Common myeloid progenitor, CD34-positive (primary cell): ENCODE measurements at regions of chr19 and their contacts with region 1.

Region 1: GRCh38 chr19:56133858-56134653 is 7.0 kb upstream of the ZNF444 start:
- DNase-seq: peak in 2 of 3 donors; percentile 66 to 68
- H3K4me3 ChIP-seq: no peak overlapping the region
- H3K27ac ChIP-seq: no peak overlapping the region
- H3K4me1 ChIP-seq: peaks cover 0 to 10% (median 3%) of the 10 kb centered on the region in 4 experiments
- H3K27me3 ChIP-seq: no peaks in the 10 kb centered on the region

Region 2: GRCh38 chr19:56110515-56111448 is 23.3 kb before region 1 on chr19:
- CTCF ChIA-PET with region 1: no interaction called
- POLR2A ChIA-PET with region 1: no interaction called
- DNase-seq: no peak
- H3K4me3 ChIP-seq: peak overlapping the region in 4 of 7 experiments; percentile 40 to 70 (median 56)
- H3K27ac ChIP-seq: peak overlapping the region in 1 of 2 experiments; percentile 64
- H3K4me1 ChIP-seq: peaks cover 8 to 98% (median 97%) of the 10 kb centered on the region in 4 experiments
- H3K27me3 ChIP-seq: no peaks in the 10 kb centered on the region

Region 3: DNA sequence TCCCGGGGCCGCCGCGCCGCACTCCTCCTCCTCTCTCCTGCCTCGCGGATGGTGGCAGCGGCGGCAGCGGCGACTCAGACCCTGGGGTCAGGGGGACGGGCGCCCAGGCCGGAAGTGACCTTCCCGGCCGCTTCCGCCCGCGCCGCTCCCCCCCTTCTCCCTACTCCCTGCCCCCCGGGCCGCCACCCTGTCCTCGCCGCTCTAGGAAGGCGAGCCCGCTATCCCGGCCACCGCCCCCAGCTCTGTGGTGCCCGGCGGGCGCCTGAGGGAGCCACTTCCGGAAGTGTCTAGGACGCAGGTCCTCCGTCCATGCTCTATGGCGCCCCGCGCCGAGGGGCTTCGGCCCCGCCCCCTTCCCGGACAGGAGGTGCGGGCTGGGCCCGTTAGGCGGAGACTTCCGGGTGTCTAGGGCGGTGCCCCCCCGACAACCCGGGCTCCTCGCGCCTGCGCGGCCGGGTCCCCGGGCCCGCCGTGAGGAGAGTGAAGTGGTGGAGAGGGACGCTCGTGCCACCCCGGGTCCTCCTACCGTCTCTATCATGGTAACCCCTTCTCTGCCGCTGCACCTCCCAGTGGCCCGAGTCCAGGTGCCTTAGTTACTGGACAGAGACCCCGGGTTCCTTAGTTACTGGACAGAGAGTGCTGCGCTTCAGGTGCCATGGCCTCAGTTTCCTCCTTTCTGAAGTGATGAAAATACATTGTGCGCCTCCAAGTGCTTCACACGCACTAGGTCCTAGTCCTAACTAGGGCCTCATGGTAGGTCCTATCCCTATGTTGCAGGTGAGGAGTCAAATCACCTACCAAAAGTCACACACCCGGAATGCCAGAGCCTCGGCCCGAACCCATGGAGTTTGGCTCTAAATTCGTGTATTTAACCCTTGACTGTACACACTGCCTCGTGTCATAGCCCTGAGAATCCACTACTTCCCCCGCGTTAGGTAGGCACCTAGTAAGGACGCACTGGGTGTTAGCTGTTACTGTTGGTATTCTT is 12.6 kb before region 1 on chr19 and contains the start of gene ZNF787:
- CTCF ChIA-PET with region 1: interaction called, 10 read pairs
- POLR2A ChIA-PET with region 1: no interaction called
- DNase-seq: peak; percentile 98 to 99 (median 98)
- H3K4me3 ChIP-seq: peak within 1 kb of the TSS; percentile 53 to 81 (median 71)
- H3K27ac ChIP-seq: peak within 1 kb of the TSS; percentile 83 to 90
- H3K4me1 ChIP-seq: peaks cover 10 to 44% (median 41%) of the 10 kb centered on the region in 4 experiments
- H3K27me3 ChIP-seq: no peaks in the 10 kb centered on the region